Right lobe of liver (tissue), 6 donors: ENCODE measurements at regions of chr17 and their contacts with region 1.

Region 1: DNA sequence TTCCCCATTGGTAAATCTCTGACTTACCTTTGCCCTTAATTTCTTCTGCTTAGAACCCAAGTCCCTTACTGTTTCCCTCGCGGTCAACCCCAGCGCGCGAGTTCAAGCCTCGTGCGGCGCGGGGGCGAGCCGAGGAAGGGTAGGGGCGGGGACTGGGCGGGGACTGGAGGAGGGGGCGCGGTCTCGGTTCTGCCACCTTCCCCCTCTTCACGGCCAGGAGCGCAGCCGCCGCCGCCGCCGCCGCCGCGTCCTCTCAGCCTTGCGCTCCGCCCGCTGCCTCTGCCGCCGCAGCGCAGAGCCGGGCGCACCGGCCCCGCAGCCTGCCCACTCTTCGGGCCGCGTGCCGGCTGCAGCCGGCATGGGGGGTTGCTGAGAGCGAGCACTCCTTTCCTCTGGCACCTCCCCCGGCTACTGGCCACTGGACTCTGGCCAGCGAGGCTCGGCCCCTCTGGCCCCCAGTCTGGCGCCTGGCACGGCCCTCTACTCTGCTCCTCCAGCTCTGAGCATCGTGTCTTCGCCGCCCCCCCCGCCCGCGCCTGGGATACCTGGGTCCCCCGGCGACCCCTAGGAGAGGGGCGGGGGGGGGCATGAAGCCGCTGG is at the start of gene RAPGEFL1:
- DNase-seq: peak; percentile 84 to 89 (median 87)
- ATAC-seq: peak; percentile 83 to 87 (median 86)
- H3K4me3 ChIP-seq: peak within 1 kb of the TSS; percentile 49 to 65 (median 56)
- H3K27ac ChIP-seq: peak within 1 kb of the TSS in 1 of 3 donors; percentile 37
- H3K4me1 ChIP-seq: peaks cover 0 to 36% (median 14%) of the 10 kb centered on the region in 4 donors
- H3K27me3 ChIP-seq: no peaks in the 10 kb centered on the region
- CTCF ChIP-seq: no peak
- POLR2A ChIP-seq: peak; percentile 37
- total RNA-seq, gene RAPGEFL1: 1.4 to 16.5 (median 4.4) TPM

Region 2: GRCh38 chr17:40058186-40058784 is 119.1 kb before region 1 on chr17:
- intact Hi-C with region 1: loop called in 1 of 2 experiments (anchors 10 kb)
- DNase-seq: no peak
- ATAC-seq: peak in 1 of 4 donors; percentile 26
- H3K4me3 ChIP-seq: no peak overlapping the region
- H3K27ac ChIP-seq: peak overlapping the region in 2 of 3 donors; percentile 34 to 36
- H3K4me1 ChIP-seq: peaks cover 0 to 15% (median 6%) of the 10 kb centered on the region in 4 donors
- H3K27me3 ChIP-seq: no peaks in the 10 kb centered on the region
- CTCF ChIP-seq: no peak
- POLR2A ChIP-seq: no peak

Region 3: DNA sequence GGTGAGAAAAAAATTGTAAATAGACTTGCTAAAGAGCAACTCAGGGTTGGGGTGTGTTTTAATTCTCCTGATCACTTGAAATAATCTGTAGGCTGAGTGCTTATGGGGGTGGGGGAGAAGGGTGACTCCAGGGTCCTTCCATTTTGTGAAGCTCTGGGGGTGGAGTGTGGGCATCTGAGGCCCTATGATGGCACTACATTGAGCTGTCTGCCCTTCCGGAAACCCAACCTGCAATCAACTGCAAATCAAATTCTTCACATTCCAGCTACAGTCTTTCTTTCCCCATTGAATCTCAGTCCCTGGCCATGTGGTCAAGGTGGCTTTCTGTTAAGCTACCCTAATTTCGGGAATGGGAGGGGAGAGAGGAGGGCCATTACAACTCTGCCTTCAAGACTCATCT is 104.3 kb after region 1 on chr17:
- intact Hi-C with region 1: no loop called
- DNase-seq: no peak
- ATAC-seq: no peak
- H3K4me3 ChIP-seq: no peak overlapping the region
- H3K27ac ChIP-seq: no peak overlapping the region
- H3K4me1 ChIP-seq: peaks cover 0 to 25% (median 8%) of the 10 kb centered on the region in 4 donors
- H3K27me3 ChIP-seq: no peaks in the 10 kb centered on the region
- CTCF ChIP-seq: no peak
- POLR2A ChIP-seq: no peak